Mammary epithelial cell (primary cell): ENCODE measurements at regions of chr6 and their contacts with region 1.

Region 1: GRCh38 chr6:113644861-113645575 is 212.1 kb upstream of the MARCKS start:
- DNase-seq: peak; percentile 97
- H3K4me3 ChIP-seq: no peak overlapping the region
- H3K27ac ChIP-seq: peak overlapping the region; percentile 86
- H3K4me1 ChIP-seq: peaks cover 25% of the 10 kb centered on the region
- H3K27me3 ChIP-seq: peaks cover 3% of the 10 kb centered on the region
- CTCF ChIP-seq: no peak

Region 2: DNA sequence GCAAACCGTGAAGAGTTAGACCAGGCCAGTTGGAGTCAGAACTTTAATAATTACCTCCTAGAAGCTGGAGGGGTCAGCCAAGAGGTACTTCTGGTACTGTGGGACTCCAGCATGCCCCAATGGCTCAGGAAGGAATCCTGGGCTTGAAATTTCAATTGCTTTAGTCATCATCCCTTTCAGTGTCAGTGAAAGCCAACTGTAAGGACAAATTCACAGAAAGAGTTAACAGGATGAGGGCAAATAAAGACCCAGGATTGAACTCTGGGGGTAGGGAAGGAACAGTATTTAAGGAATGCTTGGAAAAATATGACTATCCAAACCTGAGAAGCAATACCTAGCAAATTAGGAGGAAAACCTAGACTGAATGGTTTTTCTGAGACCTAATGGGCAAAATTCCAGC is 523.0 kb before region 1 on chr6:
- CTCF ChIA-PET with region 1: no interaction called
- dilution Hi-C with region 1: no loop called
- in situ Hi-C with region 1: no loop called
- intact Hi-C with region 1: loop called (anchors 5 kb)
- DNase-seq: peak; percentile 77
- H3K4me3 ChIP-seq: no peak overlapping the region
- H3K27ac ChIP-seq: no peak overlapping the region
- H3K4me1 ChIP-seq: peaks cover 24% of the 10 kb centered on the region
- H3K27me3 ChIP-seq: no peaks in the 10 kb centered on the region
- CTCF ChIP-seq: peak; percentile 43 to 54

Region 3: DNA sequence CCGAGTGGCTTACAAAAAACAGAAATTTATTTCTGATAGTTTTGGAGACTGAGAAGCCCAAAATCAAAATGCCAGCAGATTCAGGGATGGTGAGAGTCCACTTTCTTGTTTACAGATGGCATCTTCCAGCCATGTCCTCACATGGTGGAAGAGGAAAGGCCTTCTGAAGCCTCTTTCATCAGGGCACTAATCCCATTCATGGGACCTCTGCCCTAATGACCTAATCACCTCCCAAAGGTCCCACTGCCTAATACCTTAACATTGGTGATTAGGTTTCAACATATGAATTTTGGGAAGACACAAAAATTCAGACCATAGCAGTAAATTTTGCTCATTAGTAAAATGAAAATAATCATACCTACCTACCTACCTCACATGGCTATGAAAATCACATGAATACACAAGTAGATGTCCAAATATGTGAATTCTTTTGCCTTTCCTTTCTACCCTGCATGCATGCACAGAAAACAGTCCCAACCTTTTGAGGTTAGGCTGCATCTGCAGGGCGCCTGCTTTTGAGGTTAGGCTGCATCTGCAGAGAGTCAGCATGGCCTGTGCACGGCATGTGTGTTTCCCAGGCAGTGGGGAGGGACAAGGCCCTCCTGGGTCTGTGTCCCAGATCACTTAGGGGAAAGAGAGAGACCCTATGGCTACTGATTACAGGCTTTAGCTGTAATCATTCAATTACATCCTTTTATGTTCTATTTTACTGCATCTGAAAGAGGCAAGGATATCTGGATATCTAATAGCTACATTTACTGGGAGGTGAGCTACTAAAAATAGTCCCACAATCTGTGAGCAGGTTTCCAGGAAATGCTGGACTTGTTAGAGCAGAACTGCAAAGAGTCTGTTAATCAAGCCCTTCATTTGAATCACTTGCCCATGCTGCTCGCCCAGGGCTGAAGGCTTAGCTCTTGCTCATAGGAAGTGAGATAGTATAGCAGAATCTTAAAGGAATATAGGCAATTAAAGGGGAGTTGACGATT is 285.6 kb before region 1 on chr6:
- CTCF ChIA-PET with region 1: no interaction called
- dilution Hi-C with region 1: no loop called
- in situ Hi-C with region 1: no loop called
- intact Hi-C with region 1: loop called (anchors 5 kb)
- DNase-seq: peak; percentile 92
- H3K4me3 ChIP-seq: no peak overlapping the region
- H3K27ac ChIP-seq: peak overlapping the region; percentile 94
- H3K4me1 ChIP-seq: peaks cover 51% of the 10 kb centered on the region
- H3K27me3 ChIP-seq: no peaks in the 10 kb centered on the region
- CTCF ChIP-seq: no peak

Region 4: GRCh38 chr6:113684382-113684901 is 39.4 kb after region 1 on chr6:
- CTCF ChIA-PET with region 1: no interaction called
- dilution Hi-C with region 1: no loop called
- in situ Hi-C with region 1: no loop called
- intact Hi-C with region 1: loop called (anchors 1 kb)
- DNase-seq: peak; percentile 75
- H3K4me3 ChIP-seq: no peak overlapping the region
- H3K27ac ChIP-seq: no peak overlapping the region
- H3K4me1 ChIP-seq: peaks cover 12% of the 10 kb centered on the region
- H3K27me3 ChIP-seq: no peaks in the 10 kb centered on the region
- CTCF ChIP-seq: no peak

Region 5: DNA sequence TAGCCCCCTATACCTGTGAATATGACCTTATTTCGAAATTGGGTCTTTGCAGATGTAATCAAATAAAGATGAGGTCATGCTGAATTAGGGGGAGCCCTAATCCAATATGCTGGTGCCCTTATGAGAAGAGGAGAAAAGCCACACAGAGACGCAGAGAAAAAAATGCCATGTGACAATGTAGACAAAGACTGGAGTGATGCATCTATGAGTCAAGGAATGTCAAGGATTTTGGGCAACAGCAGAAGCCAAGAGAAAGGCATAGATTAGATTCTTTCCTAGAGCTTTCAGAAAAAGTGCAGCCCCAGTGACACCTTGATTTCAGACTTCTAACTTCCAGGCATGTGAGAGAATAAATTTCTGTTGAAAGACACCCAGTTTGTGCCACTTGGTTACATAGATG is 745.2 kb after region 1 on chr6:
- CTCF ChIA-PET with region 1: no interaction called
- dilution Hi-C with region 1: no loop called
- in situ Hi-C with region 1: no loop called
- intact Hi-C with region 1: no loop called
- DNase-seq: no peak
- H3K4me3 ChIP-seq: no peak overlapping the region
- H3K27ac ChIP-seq: no peak overlapping the region
- H3K4me1 ChIP-seq: no peaks in the 10 kb centered on the region
- H3K27me3 ChIP-seq: no peaks in the 10 kb centered on the region
- CTCF ChIP-seq: no peak